AG04450 (cell line): ENCODE measurements at regions of chr7 and their contacts with region 1.

Region 1: DNA sequence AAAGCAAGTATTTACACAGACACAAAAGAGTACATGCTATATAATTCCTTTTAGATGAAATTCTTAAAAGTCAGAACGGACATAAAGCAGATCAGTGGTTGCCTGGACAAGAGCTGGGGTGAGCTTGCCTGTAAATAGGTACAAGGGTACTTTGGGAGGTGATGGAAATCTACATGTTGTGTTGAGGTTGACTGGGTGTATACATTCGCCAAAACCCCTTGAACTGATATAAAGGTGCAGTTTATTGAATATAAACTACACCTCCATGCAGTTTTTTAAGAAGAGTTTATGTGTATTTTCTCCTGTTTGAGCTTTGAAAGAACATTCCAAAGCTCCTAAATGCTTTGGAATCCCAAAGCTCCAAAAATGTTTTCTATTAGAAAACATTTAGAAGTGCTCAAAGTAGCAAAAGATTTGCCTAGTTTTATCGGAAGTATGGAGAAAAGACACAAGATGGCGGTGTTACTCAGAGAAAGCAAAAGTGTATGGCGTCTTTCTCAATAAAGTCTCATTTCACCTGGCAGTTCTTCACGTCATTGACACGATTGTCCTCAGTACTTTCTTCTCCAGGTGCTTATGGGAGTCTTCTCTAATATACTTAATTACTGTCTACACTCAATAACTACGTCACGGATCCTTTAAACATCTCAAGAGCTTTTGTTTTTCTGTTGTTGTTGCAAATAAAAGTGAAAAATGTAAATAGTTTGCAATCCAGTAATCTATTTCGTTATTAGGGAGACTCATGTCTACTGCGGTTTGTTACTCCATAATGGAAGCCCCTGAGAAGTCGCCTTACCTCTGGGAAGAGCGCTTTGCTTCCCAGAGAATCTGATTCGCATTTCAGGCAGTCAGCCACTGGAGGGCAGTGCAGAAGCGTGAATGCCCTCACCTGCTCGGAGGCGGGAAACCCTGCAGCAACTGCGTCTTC is 14.7 kb upstream of the SEC61G start:
- DNase-seq: peak; percentile 57
- H3K4me3 ChIP-seq: peak overlapping the region; percentile 28
- H3K27ac ChIP-seq: no peak overlapping the region
- H3K27me3 ChIP-seq: no peaks in the 10 kb centered on the region
- CTCF ChIP-seq: peak; percentile 92

Region 2: GRCh38 chr7:54788664-54789063 is 14.9 kb after region 1 on chr7:
- CTCF ChIA-PET with region 1: interaction called, 30 read pairs
- POLR2A ChIA-PET with region 1: no interaction called
- DNase-seq: peak; percentile 81
- H3K4me3 ChIP-seq: no peak overlapping the region; the same call in 1 of the 2 replicates
- H3K27ac ChIP-seq: no peak overlapping the region
- H3K27me3 ChIP-seq: no peaks in the 10 kb centered on the region
- CTCF ChIP-seq: peak; percentile 84

Region 3: DNA sequence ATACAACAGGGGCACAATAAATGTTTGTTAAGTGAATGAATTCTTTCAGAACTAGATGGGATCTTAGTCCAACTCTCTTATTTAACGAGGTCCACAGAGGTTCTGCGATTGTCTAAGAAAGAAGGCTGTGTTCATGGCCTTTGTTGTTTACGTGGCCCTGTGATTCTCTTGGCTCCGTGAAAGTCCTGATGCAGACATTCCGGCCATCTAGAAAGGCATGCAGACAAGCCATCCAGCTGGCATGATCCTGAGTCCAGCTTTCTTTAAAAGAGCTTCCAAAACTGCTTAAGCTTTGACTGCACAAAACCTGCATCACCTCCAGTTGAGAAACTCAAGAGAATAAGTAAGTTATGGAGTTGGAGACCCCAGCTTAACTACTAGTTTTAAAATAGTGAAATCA is 271.1 kb after region 1 on chr7:
- CTCF ChIA-PET with region 1: interaction called, 11 read pairs
- POLR2A ChIA-PET with region 1: no interaction called
- DNase-seq: no peak
- H3K4me3 ChIP-seq: no peak overlapping the region
- H3K27ac ChIP-seq: peak overlapping the region; percentile 22
- H3K27me3 ChIP-seq: no peaks in the 10 kb centered on the region
- CTCF ChIP-seq: no peak

Region 4: DNA sequence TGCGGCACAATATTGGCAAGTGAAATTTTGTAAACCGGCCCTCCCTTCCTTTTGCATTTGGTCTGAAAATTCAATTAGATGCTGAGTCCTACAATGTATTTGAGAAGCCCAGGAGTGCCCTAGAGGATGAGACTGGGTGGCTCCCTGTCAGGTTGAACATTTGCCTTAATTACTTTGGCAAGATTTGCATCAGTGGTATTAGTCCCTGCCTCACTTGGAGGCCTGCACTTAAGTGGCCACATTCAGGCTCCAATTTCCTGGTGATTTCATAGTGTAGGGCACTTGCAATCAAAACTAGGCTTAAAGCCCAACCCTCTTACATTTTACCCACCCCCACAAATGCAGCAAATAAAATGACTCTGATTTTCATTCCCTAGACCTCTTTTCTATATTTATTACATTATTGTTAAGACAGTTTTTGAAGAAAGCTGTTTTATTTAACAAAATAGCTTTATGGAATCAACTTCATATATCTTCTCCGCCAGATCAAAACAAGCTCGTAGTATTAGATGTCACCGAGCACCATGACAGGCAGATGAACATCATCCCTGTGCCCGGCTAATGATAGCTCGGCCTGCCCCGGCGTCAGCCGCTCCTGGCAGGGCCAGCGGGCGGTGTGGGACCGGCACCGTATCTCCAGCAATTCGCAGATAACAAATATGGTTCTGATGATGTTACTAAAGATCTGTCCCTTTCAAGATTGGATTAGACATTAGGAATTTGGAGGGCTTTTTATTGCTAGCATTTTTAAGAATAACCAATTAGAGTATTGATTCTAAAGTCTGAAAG is 318.6 kb after region 1 on chr7:
- CTCF ChIA-PET with region 1: interaction called, 14 read pairs
- POLR2A ChIA-PET with region 1: no interaction called
- DNase-seq: no peak
- H3K4me3 ChIP-seq: no peak overlapping the region
- H3K27ac ChIP-seq: no peak overlapping the region
- H3K27me3 ChIP-seq: no peaks in the 10 kb centered on the region
- CTCF ChIP-seq: no peak

Region 5: GRCh38 chr7:55192718-55193117 is 419.0 kb after region 1 on chr7:
- CTCF ChIA-PET with region 1: interaction called, 9 read pairs
- POLR2A ChIA-PET with region 1: interaction called, 11 read pairs
- DNase-seq: peak; percentile 52
- H3K4me3 ChIP-seq: no peak overlapping the region
- H3K27ac ChIP-seq: peak overlapping the region; percentile 91
- H3K27me3 ChIP-seq: no peaks in the 10 kb centered on the region
- CTCF ChIP-seq: no peak

Region 6: DNA sequence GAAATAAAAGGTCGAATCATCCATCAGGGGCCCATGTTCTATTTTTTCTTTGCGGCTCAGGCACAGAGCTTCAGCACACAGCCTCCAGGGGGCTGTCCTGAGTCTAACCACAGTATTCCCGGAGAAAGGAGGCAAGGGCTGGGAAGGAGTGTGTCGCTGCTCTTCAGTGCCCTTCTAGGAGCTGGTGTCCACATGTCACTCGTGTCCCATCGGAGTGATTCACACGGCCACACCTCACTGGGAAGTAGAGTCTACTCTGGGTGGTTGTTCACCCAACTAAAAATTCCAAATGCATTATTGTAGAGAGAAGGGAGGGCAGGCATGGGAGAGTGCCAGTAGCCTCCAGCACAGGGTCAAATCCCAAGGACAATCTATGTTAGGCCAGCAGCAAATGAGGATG is 476.6 kb after region 1 on chr7:
- CTCF ChIA-PET with region 1: interaction called, 360 read pairs
- POLR2A ChIA-PET with region 1: interaction called, 4 read pairs
- DNase-seq: no peak
- H3K4me3 ChIP-seq: no peak overlapping the region
- H3K27ac ChIP-seq: no peak overlapping the region
- H3K27me3 ChIP-seq: no peaks in the 10 kb centered on the region
- CTCF ChIP-seq: peak; percentile 50

Region 7: GRCh38 chr7:55280031-55280454 is 506.3 kb after region 1 on chr7:
- CTCF ChIA-PET with region 1: interaction called, 177 read pairs
- POLR2A ChIA-PET with region 1: no interaction called
- DNase-seq: peak; percentile 30
- H3K4me3 ChIP-seq: no peak overlapping the region
- H3K27ac ChIP-seq: no peak overlapping the region
- H3K27me3 ChIP-seq: peaks cover 22% of the 10 kb centered on the region
- CTCF ChIP-seq: peak; percentile 74